ENCODE measurements at regions of chr20 and their contacts with region 1.

Region 1: DNA sequence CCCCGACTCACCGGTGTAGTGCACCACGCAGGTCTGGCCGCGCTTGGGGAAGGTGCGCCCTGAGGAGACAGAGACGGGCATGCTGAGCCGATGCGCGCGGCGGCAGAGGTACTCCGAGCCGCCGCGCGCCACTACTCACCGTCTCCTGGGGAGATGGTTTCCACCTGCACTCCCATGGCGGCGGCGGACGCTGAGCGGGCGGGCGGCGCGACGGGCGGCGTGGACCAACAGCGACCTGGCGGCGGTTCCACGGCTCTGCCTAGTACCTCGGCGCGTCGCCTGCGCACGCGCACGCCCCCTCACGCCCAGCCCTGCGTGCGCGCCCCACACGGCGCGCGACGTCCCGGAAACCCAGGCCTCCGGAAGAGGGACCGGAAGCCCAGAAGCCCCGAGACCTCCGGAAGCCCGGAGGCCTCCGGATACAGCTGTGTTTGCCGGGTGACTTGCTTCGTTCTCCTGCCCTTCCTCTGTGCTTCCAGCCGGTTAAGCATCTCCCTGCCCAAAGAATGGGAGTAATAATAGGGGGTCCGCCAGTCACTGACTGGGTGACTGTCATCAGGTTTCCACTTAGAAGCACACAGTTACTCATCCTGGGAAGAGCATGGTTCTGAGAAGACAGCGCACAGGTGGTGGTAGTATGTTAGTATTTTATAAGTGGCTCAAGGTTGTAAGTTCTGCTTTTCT is at the start of gene FKBP1A:
- DNase-seq: peak; percentile 88
- H3K4me3 Mint-ChIP-seq: peak within 1 kb of the TSS; percentile 91
- H3K27ac Mint-ChIP-seq: peak within 1 kb of the TSS; percentile 85
- H3K4me1 Mint-ChIP-seq: peaks cover 53% of the 10 kb centered on the region
- H3K27me3 Mint-ChIP-seq: peaks cover 18% of the 10 kb centered on the region
- total RNA-seq, gene FKBP1A: 320 and 330 TPM in 2 replicates

Region 2: DNA sequence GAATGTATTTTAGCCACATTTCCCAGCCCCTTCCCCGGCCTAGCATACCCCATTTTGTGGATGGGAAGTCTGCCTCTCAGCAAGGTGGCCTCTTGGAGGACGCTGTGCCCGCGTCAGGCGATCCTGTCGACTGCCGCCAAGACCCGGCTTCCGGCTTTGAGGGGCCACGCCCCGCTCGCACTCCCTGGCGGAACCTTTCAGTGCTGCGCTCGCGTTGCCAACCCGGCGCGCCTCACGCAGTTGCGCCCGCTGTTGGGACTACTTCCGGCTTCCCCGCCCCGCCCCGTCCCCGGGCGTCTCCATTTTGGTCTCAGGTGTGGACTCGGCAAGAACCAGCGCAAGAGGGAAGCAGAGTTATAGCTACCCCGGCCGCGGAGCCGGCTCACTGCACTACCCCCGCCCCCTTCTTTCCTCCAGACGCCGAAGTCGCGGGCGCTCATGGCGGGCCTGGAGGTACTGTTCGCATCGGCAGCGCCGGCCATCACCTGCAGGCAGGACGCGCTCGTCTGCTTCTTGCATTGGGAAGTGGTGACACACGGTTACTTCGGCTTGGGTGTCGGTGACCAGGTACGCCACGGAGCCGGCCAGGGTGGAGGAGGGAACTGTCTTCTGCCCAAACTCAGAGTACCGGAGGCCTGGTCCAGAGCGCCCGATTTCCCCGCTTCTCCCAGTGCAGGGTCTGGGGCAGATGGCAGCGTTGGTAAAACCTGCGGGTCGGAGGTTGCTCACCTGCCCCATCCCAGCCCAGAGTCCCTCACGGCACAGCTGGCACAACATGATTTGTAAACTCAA is 274.4 kb before region 1 on chr20 and contains the start of gene PSMF1:
- intact Hi-C with region 1: loop called (anchors 1 kb)
- DNase-seq: peak; percentile 96
- H3K4me3 Mint-ChIP-seq: peak within 1 kb of the TSS; percentile 91
- H3K27ac Mint-ChIP-seq: peak within 1 kb of the TSS; percentile 79
- H3K4me1 Mint-ChIP-seq: peaks cover 42% of the 10 kb centered on the region
- H3K27me3 Mint-ChIP-seq: no peaks in the 10 kb centered on the region
- total RNA-seq, gene PSMF1: 175 and 182 TPM in 2 replicates

Region 3: DNA sequence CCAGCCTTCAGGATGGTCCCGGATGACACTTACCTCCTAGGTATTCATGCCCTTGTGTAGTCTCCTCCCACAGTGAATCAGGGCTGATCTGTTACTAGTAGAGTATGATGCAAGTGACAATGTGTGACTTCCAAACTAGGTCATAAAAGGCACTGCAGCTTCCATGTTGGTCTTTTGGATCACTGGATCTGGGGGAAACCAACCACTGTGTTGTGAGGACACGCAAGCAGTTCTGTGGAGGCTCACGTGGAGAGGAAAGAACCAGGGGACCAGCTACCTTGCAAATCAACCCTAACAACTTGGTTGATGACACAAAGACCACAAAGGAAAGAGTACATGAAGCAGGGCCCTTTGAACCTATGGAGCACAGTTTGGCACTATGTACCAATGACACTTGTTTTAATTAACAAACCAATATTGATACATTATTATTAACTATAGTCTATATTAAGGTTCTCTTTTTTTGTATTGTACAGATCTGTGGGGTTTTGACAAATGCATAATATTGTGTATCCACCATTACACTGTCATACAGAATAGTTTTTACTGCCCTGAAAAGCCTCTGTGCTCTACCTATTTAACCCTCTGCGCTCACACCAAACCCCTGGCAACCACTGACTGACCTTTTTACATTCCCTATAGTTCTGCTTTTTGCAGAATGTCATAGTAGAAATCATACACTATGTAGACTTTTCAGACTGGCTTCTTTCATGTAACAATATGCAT is 47.8 kb before region 1 on chr20:
- intact Hi-C with region 1: loop called (anchors 5 kb)
- DNase-seq: no peak
- H3K4me3 Mint-ChIP-seq: no peak overlapping the region
- H3K27ac Mint-ChIP-seq: no peak overlapping the region
- H3K4me1 Mint-ChIP-seq: peaks cover 33% of the 10 kb centered on the region
- H3K27me3 Mint-ChIP-seq: no peaks in the 10 kb centered on the region

Region 4: GRCh38 chr20:1357921-1358671 is 34.9 kb before region 1 on chr20:
- intact Hi-C with region 1: loop called (anchors 2 kb)
- DNase-seq: peak; percentile 56
- H3K4me3 Mint-ChIP-seq: peak overlapping the region; percentile 55
- H3K27ac Mint-ChIP-seq: peak overlapping the region; percentile 85
- H3K4me1 Mint-ChIP-seq: peaks cover 61% of the 10 kb centered on the region
- H3K27me3 Mint-ChIP-seq: no peaks in the 10 kb centered on the region

Region 5: DNA sequence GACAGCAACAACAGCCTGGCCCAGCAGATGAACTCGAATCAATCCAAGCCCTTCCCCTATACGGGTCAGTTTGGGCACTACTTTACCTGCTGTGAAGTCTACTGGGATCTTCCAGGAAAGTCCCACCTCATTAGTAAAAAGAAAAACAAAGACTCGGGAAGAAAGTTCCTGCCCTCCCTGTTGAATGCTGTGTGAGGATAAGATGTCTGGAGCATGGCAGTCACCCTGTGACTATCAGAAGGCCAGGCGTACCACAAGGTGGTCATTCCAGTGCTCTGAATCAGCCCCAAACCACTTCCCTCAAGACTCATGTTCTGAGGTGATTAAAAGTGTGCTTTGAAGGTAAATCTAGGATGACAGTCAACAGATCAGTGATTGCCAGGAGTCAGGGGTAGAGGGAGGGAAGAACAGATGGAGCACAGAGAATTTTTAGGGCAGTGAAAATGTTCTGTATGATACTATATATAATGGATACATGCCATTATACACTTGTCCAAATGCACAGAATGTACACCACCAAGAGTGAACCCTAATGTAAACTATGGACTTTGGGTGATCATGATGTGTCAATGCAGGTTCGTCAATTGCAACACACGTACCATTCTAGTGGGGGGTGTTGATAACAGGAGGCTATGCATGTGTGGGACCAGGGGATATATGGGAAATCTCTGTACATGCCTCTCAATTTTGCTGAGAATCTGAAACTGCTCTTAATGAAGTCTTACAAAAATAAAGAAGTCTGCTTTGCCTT is 14.8 kb before region 1 on chr20:
- intact Hi-C with region 1: loop called (anchors 1 kb)
- DNase-seq: no peak
- H3K4me3 Mint-ChIP-seq: peak overlapping the region; percentile 27
- H3K27ac Mint-ChIP-seq: peak overlapping the region; percentile 78
- H3K4me1 Mint-ChIP-seq: peaks cover 84% of the 10 kb centered on the region
- H3K27me3 Mint-ChIP-seq: no peaks in the 10 kb centered on the region

Region 6: GRCh38 chr20:1437235-1437904 is 44.4 kb after region 1 on chr20:
- intact Hi-C with region 1: loop called (anchors 1 kb)
- DNase-seq: peak; percentile 69
- H3K4me3 Mint-ChIP-seq: no peak overlapping the region
- H3K27ac Mint-ChIP-seq: no peak overlapping the region
- H3K4me1 Mint-ChIP-seq: peaks cover 41% of the 10 kb centered on the region
- H3K27me3 Mint-ChIP-seq: peaks cover 4% of the 10 kb centered on the region

Measured in activated T-helper 2 cell treated with anti-CD3 and anti-CD28 coated beads, Interferon-gamma antibody, Interleukin-2, Interleukin-4, amounts not matched to agents 10 μg/mL and 5 μg/mL and 100 μg/mL, durations not matched to agents 14 hours and 24 hours and 36 hours (primary cell).